AG04449 (cell line): ENCODE measurements at regions of chr10 and their contacts with region 1.

Region 1: DNA sequence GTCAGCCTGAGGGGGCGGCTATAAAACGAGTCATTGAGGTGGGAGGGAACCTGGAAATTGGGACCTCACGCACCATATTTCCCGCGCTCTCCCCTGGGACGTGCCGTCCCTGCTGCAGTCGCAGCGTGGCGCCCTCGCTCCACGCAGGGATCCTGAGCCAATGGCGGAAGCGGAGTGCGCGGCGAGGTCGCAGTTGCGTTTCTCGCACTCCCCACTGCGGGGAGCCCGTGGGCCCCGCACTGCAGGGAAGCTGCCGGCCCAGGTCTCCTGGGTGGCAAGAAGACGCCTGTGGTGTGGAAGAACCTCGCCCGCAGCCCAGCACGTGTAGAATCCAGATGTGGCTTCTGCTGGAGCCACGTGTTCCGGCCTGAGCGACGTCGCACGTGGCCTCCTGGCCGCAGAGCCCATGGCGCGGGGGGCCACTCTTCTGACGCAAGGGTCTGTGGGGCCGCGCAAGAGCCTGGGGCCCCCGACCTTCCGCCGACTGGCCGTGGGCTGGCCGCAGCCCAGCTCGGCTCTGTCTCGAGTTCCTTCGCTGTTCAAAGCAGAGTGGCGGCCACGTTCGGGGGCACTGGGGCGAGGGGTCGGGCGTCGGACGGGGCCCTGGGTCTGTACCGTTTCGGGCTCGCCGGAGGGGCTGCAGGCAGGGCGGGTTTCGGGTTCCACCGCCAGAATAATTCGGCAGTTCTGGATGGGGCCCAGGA is 26.4 kb downstream of the HIF1AN start:
- DNase-seq: no peak
- H3K4me3 ChIP-seq: no peak overlapping the region
- CTCF ChIP-seq: peak; percentile 91

Region 2: GRCh38 chr10:100481462-100482081 is 80.6 kb before region 1 on chr10:
- CTCF ChIA-PET with region 1: no interaction called
- POLR2A ChIA-PET with region 1: no interaction called
- DNase-seq: no peak
- H3K4me3 ChIP-seq: peak overlapping the region; percentile 53
- CTCF ChIP-seq: no peak

Region 3: DNA sequence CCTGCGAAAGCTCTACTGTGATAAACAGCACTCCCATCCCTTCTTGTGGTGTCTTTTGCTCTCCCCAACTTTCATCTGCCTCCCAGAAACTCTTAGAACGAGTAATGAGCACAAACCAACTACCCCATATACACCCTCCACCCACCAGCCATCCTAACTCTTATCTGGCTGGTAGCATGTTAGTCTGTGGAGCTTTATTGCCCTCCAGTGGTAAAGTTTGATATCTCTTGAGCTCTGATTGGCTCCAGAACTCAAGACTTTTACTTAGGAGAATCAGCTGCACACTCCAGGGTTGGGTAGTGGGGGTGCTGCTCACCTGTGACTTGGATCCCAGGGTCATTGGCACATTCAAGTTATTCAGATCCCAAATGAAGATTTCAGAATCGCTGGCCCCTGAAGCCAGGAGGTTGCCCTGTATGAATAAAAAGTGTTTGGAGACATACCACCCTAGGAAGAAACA is 53.4 kb before region 1 on chr10:
- CTCF ChIA-PET with region 1: no interaction called
- POLR2A ChIA-PET with region 1: no interaction called
- DNase-seq: no peak
- H3K4me3 ChIP-seq: no peak overlapping the region
- CTCF ChIP-seq: peak; percentile 63

Region 4: GRCh38 chr10:100551196-100551595 is 11.0 kb before region 1 on chr10:
- CTCF ChIA-PET with region 1: interaction called, 18 read pairs
- POLR2A ChIA-PET with region 1: no interaction called
- DNase-seq: no peak
- H3K4me3 ChIP-seq: no peak overlapping the region
- CTCF ChIP-seq: no peak